Caco-2 (cell line): ENCODE measurements at regions of chr5 and their contacts with region 1.

Region 1: GRCh38 chr5:129361440-129362025 is 98.6 kb upstream of the ADAMTS19 start:
- DNase-seq: peak in 1 of 2 experiments; percentile 12
- H3K4me3 ChIP-seq: no peak overlapping the region
- H3K4me3 Mint-ChIP-seq: no peak overlapping the region
- H3K27ac Mint-ChIP-seq: no peak overlapping the region
- H3K4me1 ChIP-seq: no peaks in the 10 kb centered on the region
- H3K4me1 Mint-ChIP-seq: no peaks in the 10 kb centered on the region
- H3K27me3 ChIP-seq: no peaks in the 10 kb centered on the region
- H3K27me3 Mint-ChIP-seq: no peaks in the 10 kb centered on the region
- CTCF ChIP-seq: peak; percentile 47 to 64

Region 2: DNA sequence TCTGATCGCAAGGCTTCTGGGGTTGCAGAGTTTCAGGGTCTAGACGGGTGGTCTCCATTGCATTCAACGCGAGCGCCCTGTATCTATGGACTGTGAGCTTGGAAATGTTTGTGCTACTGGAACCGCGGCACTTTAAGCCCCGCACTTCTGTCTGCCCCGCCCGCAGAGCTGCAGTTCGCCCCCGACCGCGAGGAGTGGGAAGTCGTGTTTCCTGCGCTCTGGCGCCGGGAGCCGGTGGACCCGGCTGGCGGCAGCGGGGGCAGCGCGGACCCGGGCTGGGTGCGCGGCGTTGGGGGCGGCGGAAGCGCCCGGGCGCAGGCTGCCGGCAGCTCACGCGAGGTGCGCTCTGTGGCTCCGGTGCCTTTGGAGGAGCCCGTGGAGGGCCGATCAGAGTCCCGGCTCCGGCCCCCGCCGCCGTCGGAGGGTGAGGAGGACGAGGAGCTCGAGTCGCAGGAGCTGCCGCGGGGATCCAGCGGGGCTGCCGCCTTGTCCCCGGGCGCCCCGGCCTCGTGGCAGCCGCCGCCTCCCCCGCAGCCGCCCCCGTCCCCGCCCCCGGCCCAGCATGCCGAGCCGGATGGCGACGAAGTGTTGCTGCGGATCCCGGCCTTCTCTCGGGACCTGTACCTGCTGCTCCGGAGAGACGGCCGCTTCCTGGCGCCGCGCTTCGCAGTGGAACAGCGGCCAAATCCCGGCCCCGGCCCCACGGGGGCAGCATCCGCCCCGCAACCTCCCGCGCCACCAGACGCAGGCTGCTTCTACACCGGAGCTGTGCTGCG is 99.6 kb after region 1 on chr5:
- CTCF ChIA-PET with region 1: no interaction called
- POLR2A ChIA-PET with region 1: no interaction called
- intact Hi-C with region 1: loop called (anchors 10 kb)
- DNase-seq: peak; percentile 63 to 76
- H3K4me3 ChIP-seq: peak overlapping the region; percentile 40
- H3K4me3 Mint-ChIP-seq: peak overlapping the region; percentile 78
- H3K27ac Mint-ChIP-seq: peak overlapping the region; percentile 31
- H3K4me1 ChIP-seq: no peaks in the 10 kb centered on the region; the same call in 1 of the 2 replicates
- H3K4me1 Mint-ChIP-seq: no peaks in the 10 kb centered on the region
- H3K27me3 ChIP-seq: peaks cover 3% of the 10 kb centered on the region
- H3K27me3 Mint-ChIP-seq: peaks cover 29% of the 10 kb centered on the region
- CTCF ChIP-seq: peak; percentile 60 to 80